ENCODE measurements at regions of chr5 and their contacts with region 1.

Region 1: GRCh38 chr5:74232281-74232680 is 408.2 kb downstream of the ENC1 start:
- DNase-seq: peak; percentile 99
- H3K4me3 ChIP-seq: no peak overlapping the region
- H3K27ac ChIP-seq: peak overlapping the region; percentile 86
- H3K4me1 ChIP-seq: peaks cover 33% of the 10 kb centered on the region
- H3K27me3 ChIP-seq: no peaks in the 10 kb centered on the region
- CTCF ChIP-seq: no peak

Region 2: DNA sequence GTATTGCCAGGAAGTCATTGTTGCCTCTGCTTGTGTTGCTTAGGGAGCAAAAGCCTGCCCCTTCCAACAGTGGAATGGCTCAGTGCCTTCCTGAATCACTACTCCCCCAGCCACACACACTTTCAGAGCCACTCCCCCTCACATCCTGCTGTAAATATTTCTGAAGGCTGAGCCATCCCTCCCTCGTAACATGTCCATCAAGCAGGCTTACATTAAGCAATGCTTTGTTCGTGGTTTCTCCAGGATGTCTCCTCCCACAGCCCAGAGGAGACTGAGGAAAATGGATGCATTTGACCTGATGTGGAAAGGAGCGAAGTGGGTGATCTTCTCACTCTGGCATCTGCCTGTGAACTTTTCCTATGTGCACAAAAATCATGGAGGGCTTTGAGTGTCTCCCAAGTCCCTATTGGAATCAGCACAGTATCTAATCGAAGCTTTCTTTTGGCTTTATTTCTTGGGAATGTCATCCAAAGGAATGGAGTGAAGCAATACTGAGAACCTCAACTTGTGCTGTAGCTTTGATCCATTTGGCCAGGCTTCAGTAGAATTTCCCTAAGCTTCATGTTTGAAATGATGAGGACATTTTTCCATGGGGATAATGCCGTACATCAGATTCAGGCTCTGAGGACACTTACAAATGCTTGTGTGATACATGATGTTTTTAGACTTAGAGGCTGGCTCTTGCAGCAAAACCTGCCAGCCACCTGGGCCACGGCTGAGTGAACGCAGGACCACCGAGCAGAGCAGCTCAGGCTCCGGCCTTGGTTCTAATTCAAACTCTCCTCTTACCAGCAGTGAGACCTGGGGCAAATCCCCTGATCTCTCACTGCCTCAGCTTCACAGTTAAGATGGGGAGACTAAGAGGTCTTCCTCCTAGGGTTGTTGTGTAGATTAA is 19.1 kb after region 1 on chr5:
- CTCF ChIA-PET with region 1: no interaction called
- dilution Hi-C with region 1: no loop called
- in situ Hi-C with region 1: no loop called
- intact Hi-C with region 1: loop called (anchors 1 kb)
- DNase-seq: peak; percentile 98
- H3K4me3 ChIP-seq: no peak overlapping the region
- H3K27ac ChIP-seq: peak overlapping the region; percentile 86
- H3K4me1 ChIP-seq: peaks cover 35% of the 10 kb centered on the region
- H3K27me3 ChIP-seq: no peaks in the 10 kb centered on the region
- CTCF ChIP-seq: no peak

Region 3: DNA sequence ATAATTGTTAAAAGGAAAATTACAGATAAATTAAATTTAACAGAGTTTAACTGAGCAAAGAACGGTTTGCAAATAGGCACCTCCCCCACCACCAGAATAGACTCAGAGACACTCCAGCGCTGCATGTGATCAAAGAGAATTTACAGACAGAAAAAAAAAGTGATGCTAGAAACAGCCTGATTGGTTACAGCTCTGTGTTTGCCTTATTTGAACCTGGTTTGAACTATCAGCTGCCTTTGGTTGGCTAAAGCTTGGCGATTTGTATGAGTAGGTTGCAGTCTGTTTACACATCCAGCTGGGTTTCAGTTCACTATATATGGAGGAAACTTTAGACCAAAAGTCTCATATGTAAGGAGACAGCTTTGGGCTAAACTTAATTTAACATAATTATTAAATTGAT is 159.1 kb after region 1 on chr5:
- CTCF ChIA-PET with region 1: no interaction called
- dilution Hi-C with region 1: no loop called
- in situ Hi-C with region 1: no loop called
- intact Hi-C with region 1: no loop called
- DNase-seq: no peak
- H3K4me3 ChIP-seq: no peak overlapping the region
- H3K27ac ChIP-seq: no peak overlapping the region
- H3K4me1 ChIP-seq: peaks cover 52% of the 10 kb centered on the region
- H3K27me3 ChIP-seq: no peaks in the 10 kb centered on the region
- CTCF ChIP-seq: no peak

Region 4: GRCh38 chr5:74401946-74402320 is 169.7 kb after region 1 on chr5:
- CTCF ChIA-PET with region 1: interaction called, 14 read pairs
- dilution Hi-C with region 1: no loop called
- in situ Hi-C with region 1: no loop called
- intact Hi-C with region 1: no loop called
- DNase-seq: no peak
- H3K4me3 ChIP-seq: no peak overlapping the region
- H3K27ac ChIP-seq: no peak overlapping the region
- H3K4me1 ChIP-seq: no peaks in the 10 kb centered on the region
- H3K27me3 ChIP-seq: no peaks in the 10 kb centered on the region
- CTCF ChIP-seq: no peak